Activated CD8-positive, alpha-beta T cell treated with anti-CD3 and anti-CD28 coated beads for 36 hours (primary cell): ENCODE measurements at regions of chr12 and their contacts with region 1.

Region 1: DNA sequence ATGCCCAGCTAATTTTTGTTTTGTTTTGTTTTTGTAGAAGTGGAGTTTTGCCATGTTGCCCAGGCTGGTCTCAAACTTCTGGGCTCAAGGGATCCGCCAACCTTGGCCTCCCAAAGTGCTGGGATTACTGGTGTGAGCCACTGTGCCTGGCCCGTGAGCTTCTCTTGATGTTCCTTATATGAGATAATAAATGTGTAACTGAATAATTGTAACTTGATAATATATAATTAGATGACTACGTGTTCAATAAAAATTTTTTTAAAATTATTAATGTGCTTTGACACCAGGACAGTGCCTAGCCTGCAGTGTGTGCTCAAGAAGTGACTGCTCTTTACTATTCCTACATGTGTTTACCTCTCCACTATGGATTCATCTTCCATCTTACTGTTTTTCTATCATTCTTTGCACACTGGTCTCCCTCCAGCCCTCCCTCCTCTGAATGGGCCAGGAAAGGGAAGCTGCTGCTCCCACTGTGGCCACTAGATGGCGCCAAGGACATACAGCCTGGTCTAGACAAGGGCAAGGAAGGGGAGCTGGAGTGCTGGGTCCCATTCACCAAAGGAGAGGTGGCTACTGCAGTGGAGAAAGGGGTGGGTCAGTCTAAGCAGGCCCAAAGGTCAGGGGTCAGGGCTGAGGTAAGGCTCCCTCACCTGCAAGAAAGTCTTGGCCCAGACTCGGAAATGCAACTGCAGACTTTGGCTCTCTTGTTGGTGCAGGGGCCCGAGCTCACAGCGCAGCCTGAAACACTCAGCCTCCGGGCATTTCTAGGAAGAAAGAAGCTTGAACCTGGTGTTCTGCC is 14.7 kb upstream of the ZNF385A start:
- DNase-seq: peak; percentile 93
- ATAC-seq: peak; percentile 97
- H3K4me3 Mint-ChIP-seq: no peak overlapping the region
- H3K27ac Mint-ChIP-seq: no peak overlapping the region
- H3K4me1 Mint-ChIP-seq: peaks cover 5% of the 10 kb centered on the region
- H3K27me3 Mint-ChIP-seq: no peaks in the 10 kb centered on the region
- CTCF ChIP-seq: peak; percentile 92

Region 2: DNA sequence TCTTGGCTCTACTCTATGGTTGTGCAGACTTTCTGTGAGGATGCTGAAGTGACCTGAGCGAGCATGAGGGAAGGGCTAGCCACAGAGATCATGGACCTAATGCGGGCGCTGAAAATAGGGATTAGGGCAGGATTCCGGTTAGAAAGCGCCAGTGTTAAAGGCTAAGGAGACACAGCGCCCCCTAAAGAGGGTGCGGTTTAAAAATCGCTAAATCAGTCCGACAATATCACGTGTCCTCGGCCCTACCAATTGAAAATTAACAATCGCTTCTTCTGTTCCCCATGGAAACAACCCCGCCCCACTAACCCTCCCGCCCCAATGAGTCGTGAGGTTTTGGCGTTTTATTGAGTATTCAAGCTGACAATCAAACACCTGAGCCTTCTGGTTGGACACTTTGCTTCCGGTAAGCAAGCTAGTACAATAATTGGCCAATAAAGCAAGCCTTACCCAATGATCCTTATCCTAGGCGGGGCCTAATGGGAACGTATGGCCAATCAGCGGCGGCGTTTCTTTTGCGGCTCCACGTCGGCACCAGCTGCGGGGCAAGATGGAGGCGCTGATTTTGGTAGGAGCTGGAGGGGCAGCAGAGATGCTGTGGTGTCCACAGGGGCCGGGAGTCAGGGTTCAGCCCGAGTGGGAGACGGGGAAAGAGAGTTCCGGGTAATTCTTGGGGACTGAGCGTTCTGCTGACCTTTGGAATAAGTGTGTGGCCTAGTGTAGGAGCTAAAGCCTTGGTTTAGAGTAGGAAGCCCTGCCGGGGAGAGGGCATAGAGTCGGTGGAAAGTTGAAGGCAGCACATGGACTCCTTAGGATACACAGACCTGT is 74.4 kb before region 1 on chr12 and contains the start of gene COPZ1:
- CTCF ChIA-PET with region 1: interaction called, 10 read pairs
- POLR2A ChIA-PET with region 1: no interaction called
- intact Hi-C with region 1: no loop called
- DNase-seq: peak; percentile 98
- ATAC-seq: peak; percentile 99
- H3K4me3 Mint-ChIP-seq: peak within 1 kb of the TSS; percentile 98
- H3K27ac Mint-ChIP-seq: peak within 1 kb of the TSS; percentile 94
- H3K4me1 Mint-ChIP-seq: peaks cover 28% of the 10 kb centered on the region
- H3K27me3 Mint-ChIP-seq: no peaks in the 10 kb centered on the region
- CTCF ChIP-seq: peak; percentile 65
- total RNA-seq, gene COPZ1: 75.8 to 78.4 TPM

Region 3: DNA sequence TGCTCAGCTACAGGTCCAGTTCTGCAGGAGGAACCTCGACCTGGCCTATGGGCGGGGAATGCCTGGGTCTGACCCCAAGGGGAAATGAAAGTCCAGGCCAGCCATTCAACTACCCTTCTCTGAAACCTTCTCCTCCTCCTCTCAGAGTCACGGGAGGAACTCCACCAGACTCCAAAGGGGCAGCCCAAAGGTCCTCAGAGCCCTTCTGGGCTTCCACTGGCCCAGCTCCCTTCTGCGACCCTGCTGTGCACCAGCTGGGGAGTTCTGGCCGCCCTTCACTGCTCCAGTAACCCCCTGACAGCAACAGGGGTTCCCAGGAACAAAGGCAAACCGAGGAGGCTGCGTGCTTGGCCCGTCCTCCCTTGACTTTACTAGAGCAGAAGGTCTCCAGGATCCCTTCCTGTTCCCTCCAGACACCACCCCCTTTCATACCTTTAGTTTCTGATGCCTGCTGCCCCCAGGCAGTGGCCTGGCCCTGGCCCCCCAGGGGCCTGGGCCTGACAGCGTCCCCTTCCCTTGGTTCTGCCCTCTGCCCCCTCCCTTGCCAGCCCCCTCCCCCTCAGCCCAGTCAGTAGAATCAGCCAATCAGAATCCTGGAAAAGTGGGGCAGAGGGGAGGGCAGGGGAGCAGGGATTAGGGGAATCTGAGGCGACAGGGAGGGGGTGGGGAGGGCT is 13.8 kb before region 1 on chr12:
- CTCF ChIA-PET with region 1: interaction called, 74 read pairs
- POLR2A ChIA-PET with region 1: interaction called, 7 read pairs
- intact Hi-C with region 1: no loop called
- DNase-seq: no peak
- ATAC-seq: no peak
- H3K4me3 Mint-ChIP-seq: no peak overlapping the region
- H3K27ac Mint-ChIP-seq: no peak overlapping the region
- H3K4me1 Mint-ChIP-seq: peaks cover 12% of the 10 kb centered on the region
- H3K27me3 Mint-ChIP-seq: no peaks in the 10 kb centered on the region
- CTCF ChIP-seq: no peak

Region 4: GRCh38 chr12:54439521-54440255 is 40.5 kb after region 1 on chr12:
- CTCF ChIA-PET with region 1: interaction called, 479 read pairs
- POLR2A ChIA-PET with region 1: interaction called, 13 read pairs
- intact Hi-C with region 1: loop called (anchors 1 kb)
- DNase-seq: no peak
- ATAC-seq: peak; percentile 88
- H3K4me3 Mint-ChIP-seq: no peak overlapping the region
- H3K27ac Mint-ChIP-seq: no peak overlapping the region
- H3K4me1 Mint-ChIP-seq: peaks cover 10% of the 10 kb centered on the region
- H3K27me3 Mint-ChIP-seq: no peaks in the 10 kb centered on the region
- CTCF ChIP-seq: peak; percentile 91

Region 5: DNA sequence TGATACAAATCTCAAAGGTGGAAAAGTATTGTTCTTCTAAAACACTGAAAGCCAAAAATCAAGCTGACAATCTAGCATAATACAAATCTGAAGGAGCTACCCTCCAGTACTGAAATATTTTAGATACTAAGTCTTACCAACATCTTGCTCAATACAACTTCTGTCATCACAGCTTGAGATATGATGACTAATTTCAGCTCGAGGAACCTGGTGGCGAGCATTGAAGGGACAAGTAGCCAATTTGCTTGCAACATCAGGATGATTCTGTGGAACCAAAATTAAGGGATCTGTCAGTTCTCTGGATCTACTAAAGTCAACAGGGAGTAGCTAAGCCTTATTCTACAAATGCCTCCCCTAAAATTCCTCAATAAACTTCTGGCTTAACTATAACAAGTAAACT is 63.8 kb after region 1 on chr12:
- CTCF ChIA-PET with region 1: interaction called, 20 read pairs
- POLR2A ChIA-PET with region 1: no interaction called
- intact Hi-C with region 1: no loop called
- DNase-seq: no peak
- ATAC-seq: no peak
- H3K4me3 Mint-ChIP-seq: no peak overlapping the region
- H3K27ac Mint-ChIP-seq: no peak overlapping the region
- H3K4me1 Mint-ChIP-seq: peaks cover 2% of the 10 kb centered on the region
- H3K27me3 Mint-ChIP-seq: peaks cover 13% of the 10 kb centered on the region
- CTCF ChIP-seq: no peak

Region 6: DNA sequence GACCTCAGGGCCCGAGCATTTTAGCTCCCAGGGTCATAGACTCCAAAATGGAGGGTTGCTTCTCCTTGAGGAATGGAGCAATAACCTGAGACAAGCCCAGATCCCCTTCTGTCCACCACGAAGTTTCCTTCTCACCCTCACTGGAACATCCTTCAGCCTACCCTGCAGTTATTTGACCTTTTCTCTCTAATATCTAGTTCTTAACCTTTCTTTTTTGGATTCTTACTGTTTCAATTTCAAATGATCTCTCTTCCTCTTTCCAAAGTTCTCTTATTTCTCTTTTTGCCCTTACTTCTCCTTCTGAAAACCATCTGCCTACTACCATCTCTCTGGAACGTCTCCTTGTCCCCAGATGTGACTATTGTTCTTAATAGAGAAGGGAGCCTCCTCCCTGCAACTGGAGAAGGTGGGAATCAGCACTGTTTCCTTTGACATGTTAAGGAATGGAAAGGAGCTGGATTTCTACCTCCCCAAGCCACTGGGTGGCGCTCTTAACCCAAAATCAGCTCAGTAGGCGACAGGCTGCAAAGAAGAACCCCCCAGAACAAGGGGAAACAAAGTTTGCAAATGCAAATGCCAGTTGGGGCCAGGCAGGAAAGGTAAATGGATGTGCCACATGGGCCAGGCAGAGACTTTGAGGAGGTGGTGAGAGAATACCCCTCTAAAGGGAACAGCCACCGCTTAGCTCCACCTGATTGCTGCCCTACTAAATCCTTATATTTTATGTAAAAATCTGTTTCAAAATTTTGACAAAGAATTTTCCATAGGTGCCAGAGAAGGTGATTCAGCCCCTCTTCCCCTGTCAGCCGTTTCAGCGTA is 127.8 kb after region 1 on chr12:
- CTCF ChIA-PET with region 1: interaction called, 16 read pairs
- POLR2A ChIA-PET with region 1: no interaction called
- intact Hi-C with region 1: no loop called
- DNase-seq: peak; percentile 70
- ATAC-seq: peak; percentile 51
- H3K4me3 Mint-ChIP-seq: no peak overlapping the region
- H3K27ac Mint-ChIP-seq: no peak overlapping the region
- H3K4me1 Mint-ChIP-seq: peaks cover 9% of the 10 kb centered on the region
- H3K27me3 Mint-ChIP-seq: no peaks in the 10 kb centered on the region
- CTCF ChIP-seq: peak; percentile 91

Region 7: GRCh38 chr12:54716261-54716660 is 317.1 kb after region 1 on chr12:
- CTCF ChIA-PET with region 1: no interaction called
- POLR2A ChIA-PET with region 1: no interaction called
- intact Hi-C with region 1: no loop called
- DNase-seq: no peak
- ATAC-seq: no peak
- H3K4me3 Mint-ChIP-seq: no peak overlapping the region
- H3K27ac Mint-ChIP-seq: no peak overlapping the region
- H3K4me1 Mint-ChIP-seq: no peaks in the 10 kb centered on the region
- H3K27me3 Mint-ChIP-seq: peaks cover 11% of the 10 kb centered on the region
- CTCF ChIP-seq: no peak